CD8-positive, alpha-beta T cell (primary cell): ENCODE measurements at regions of chr2 and their contacts with region 1.

Region 1: GRCh38 chr2:48525269-48526102 is 4.5 kb upstream of the STON1 start:
- DNase-seq: no peak
- ATAC-seq: no peak
- H3K4me3 ChIP-seq: no peak overlapping the region
- H3K4me3 Mint-ChIP-seq: no peak overlapping the region
- H3K27ac ChIP-seq: no peak overlapping the region
- H3K27ac Mint-ChIP-seq: no peak overlapping the region
- H3K4me1 ChIP-seq: peaks cover 4% of the 10 kb centered on the region
- H3K4me1 Mint-ChIP-seq: peaks cover 9% of the 10 kb centered on the region
- H3K27me3 ChIP-seq: peaks cover 0 to 2% of the 10 kb centered on the region in 2 experiments
- H3K27me3 Mint-ChIP-seq: no peaks in the 10 kb centered on the region
- CTCF ChIP-seq: no peak

Region 2: DNA sequence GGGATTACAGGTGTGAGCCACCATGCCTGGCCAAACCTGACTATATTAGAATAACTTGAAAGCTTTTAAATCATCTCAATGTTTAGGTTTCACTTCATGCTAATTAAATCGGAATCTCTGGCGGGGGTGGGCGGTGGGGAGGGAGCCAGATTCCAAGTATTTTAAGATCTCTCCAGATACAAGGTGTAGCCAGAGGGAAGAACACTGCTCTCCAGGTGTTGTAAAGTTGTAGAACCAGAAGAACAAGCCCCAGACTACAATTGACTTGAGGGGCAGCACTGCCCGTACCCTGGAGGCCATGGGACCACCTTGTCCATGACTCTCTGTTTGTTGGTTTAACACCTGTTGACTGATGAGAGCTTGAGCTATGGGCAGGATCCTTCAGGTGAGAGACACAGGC is 59.0 kb after region 1 on chr2:
- CTCF ChIA-PET with region 1: no interaction called
- POLR2A ChIA-PET with region 1: no interaction called
- intact Hi-C with region 1: loop called in 1 of 2 experiments (anchors 2 kb)
- DNase-seq: no peak
- ATAC-seq: no peak
- H3K4me3 ChIP-seq: no peak overlapping the region
- H3K4me3 Mint-ChIP-seq: no peak overlapping the region
- H3K27ac ChIP-seq: no peak overlapping the region
- H3K27ac Mint-ChIP-seq: no peak overlapping the region
- H3K4me1 ChIP-seq: no peaks in the 10 kb centered on the region
- H3K4me1 Mint-ChIP-seq: no peaks in the 10 kb centered on the region
- H3K27me3 ChIP-seq: no peaks in the 10 kb centered on the region
- H3K27me3 Mint-ChIP-seq: peaks cover 9% of the 10 kb centered on the region
- CTCF ChIP-seq: no peak